Caco-2 (cell line): ENCODE measurements at regions of chr5 and their contacts with region 1.

Region 1: DNA sequence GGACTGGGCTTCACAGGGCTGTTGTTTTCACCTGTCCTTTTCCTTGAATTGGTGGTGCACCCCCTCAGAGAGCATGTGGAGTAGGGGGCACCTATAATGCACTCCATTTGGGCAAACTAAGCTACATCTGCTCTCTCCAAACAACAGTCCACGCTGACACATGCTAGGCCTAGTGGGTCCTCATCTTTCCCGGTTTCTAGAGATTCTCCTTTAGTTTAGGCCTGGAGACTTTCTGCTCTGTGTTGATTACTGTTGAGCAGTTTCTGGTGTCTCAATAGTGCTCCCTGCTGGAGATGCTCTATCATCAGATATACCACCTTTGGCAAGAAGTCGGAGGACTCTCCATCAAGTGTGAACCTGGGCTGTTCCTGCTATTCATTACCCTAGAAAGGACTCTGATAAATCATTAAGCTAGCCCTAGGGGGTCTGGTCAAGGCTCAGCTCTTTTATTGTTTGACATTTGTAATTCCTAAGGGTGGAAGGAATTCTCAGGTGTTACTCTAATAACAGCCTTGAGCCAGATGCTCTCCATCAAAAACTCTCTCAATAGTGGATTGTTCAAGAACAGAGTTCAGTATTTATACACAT is 64.0 kb upstream of the FYB1 start:
- DNase-seq: peak; percentile 77 to 79
- H3K4me3 ChIP-seq: no peak overlapping the region
- H3K4me3 Mint-ChIP-seq: no peak overlapping the region
- H3K27ac Mint-ChIP-seq: peak overlapping the region; percentile 65
- H3K4me1 ChIP-seq: peaks cover 18% of the 10 kb centered on the region
- H3K4me1 Mint-ChIP-seq: peaks cover 24% of the 10 kb centered on the region
- H3K27me3 ChIP-seq: no peaks in the 10 kb centered on the region
- H3K27me3 Mint-ChIP-seq: no peaks in the 10 kb centered on the region
- CTCF ChIP-seq: peak; percentile 70 to 73

Region 2: DNA sequence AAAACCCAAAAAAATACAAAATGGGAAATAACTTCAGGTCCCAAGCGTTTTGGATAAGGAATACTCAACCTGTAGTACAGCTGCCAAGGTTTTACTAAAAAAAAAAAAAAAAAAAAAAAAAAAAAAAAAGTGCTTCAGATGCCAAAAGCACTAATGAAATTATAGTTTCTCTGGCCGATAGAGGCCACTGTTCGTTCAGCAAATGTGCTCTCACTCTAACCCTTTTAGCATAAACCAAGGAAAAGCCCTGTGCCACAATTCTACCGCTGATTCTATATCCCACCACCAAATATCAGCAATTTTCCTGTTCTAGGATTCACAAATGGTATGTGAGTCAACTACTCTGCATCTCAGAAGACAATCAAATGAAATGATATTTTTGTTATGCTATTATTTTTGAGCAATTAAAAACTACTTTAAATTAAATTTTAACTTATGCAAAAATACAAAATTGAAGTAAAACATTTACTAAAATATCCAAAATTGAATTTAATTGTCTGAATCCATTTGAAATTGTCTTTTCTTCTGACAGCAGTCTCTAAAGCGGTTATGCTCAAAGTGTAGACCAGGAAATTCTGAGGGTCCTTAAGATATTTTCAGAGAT is 288.9 kb before region 1 on chr5:
- CTCF ChIA-PET with region 1: no interaction called
- POLR2A ChIA-PET with region 1: no interaction called
- intact Hi-C with region 1: loop called (anchors 1 kb)
- DNase-seq: peak; percentile 50
- H3K4me3 ChIP-seq: no peak overlapping the region
- H3K4me3 Mint-ChIP-seq: no peak overlapping the region
- H3K27ac Mint-ChIP-seq: no peak overlapping the region
- H3K4me1 ChIP-seq: no peaks in the 10 kb centered on the region
- H3K4me1 Mint-ChIP-seq: no peaks in the 10 kb centered on the region
- H3K27me3 ChIP-seq: no peaks in the 10 kb centered on the region
- H3K27me3 Mint-ChIP-seq: no peaks in the 10 kb centered on the region
- CTCF ChIP-seq: peak; percentile 23 to 68

Region 3: DNA sequence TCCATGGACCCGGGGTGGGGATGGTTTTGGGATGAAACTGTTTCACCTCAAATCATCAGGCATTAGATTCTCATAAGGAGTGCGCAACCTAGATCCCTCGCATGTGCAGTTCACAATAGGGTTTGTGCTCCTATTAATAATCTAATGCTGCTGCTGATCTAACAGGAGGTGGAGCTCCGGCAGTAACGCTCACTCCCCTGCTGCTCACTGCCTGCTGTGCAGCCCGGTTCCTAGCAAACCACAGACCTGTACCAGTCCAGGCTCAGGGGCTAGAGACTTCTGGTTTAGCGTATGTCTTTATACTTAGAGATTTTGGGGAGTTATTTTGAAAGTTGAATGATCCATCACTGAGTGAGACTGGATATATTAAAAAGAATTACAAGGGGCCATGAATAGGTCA is 259.3 kb before region 1 on chr5:
- CTCF ChIA-PET with region 1: no interaction called
- POLR2A ChIA-PET with region 1: no interaction called
- intact Hi-C with region 1: no loop called
- DNase-seq: no peak
- H3K4me3 ChIP-seq: no peak overlapping the region
- H3K4me3 Mint-ChIP-seq: no peak overlapping the region
- H3K27ac Mint-ChIP-seq: no peak overlapping the region
- H3K4me1 ChIP-seq: no peaks in the 10 kb centered on the region
- H3K4me1 Mint-ChIP-seq: no peaks in the 10 kb centered on the region
- H3K27me3 ChIP-seq: no peaks in the 10 kb centered on the region
- H3K27me3 Mint-ChIP-seq: no peaks in the 10 kb centered on the region
- CTCF ChIP-seq: no peak

Region 4: GRCh38 chr5:39074016-39074886 is 209.1 kb before region 1 on chr5 and contains the start of gene RICTOR:
- CTCF ChIA-PET with region 1: no interaction called
- POLR2A ChIA-PET with region 1: no interaction called
- intact Hi-C with region 1: loop called (anchors 5 kb)
- DNase-seq: peak; percentile 89 to 92
- H3K4me3 ChIP-seq: peak within 1 kb of the TSS; percentile 83
- H3K4me3 Mint-ChIP-seq: peak within 1 kb of the TSS; percentile 95
- H3K27ac Mint-ChIP-seq: peak within 1 kb of the TSS; percentile 94
- H3K4me1 ChIP-seq: peaks cover 6% of the 10 kb centered on the region; the same call in 1 of the 2 replicates
- H3K4me1 Mint-ChIP-seq: no peaks in the 10 kb centered on the region
- H3K27me3 ChIP-seq: no peaks in the 10 kb centered on the region
- H3K27me3 Mint-ChIP-seq: no peaks in the 10 kb centered on the region
- CTCF ChIP-seq: no peak
- total RNA-seq, gene RICTOR: 25.2 and 25.7 TPM in 2 replicates

Region 5: DNA sequence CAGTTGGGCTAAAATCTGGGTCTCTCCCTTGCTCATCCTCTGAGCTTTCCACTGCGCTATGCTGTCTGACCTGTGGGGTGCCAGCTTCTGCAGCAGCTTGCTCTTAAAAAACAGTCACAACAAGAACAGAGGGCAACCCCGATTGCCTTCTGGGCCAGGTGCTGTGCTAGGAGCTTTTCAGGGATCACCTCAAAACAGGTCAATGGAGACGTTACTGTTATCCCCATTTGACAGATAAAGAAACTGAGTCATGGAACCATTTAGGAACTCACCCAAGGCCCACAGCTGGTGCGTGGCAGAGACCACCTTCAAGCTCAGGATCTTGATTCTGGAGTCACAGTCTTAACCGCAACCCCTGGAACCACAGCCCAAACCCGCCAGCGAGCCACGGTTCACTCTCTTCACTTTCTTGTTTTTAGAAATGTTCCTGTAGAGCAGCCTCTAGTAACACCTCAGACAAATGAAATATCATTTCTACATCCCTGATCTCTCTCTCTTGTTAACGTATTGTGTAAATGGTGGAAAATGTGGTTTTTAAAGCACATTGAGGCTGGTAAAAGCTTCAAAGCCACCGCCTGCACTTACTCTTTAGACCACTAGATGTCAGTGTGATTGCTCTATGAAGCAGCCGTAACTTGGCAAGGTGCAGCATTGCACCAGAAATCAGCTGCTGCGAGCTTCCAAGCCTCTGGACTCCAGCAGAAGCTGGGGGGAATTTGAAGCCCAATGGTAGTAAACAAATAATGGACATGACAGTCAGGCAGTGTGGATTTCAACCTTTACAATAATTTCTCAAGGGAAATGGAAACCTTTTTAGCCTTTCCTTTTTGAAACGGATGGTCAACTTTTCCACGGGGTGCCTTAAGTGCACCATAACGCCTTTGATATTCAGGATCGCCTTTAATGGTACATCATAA is 65.7 kb before region 1 on chr5:
- CTCF ChIA-PET with region 1: interaction called, 51 read pairs
- POLR2A ChIA-PET with region 1: interaction called, 4 read pairs
- intact Hi-C with region 1: loop called (anchors 1 kb)
- DNase-seq: peak; percentile 74 to 77
- H3K4me3 ChIP-seq: no peak overlapping the region
- H3K4me3 Mint-ChIP-seq: no peak overlapping the region
- H3K27ac Mint-ChIP-seq: peak overlapping the region; percentile 2
- H3K4me1 ChIP-seq: peaks cover 24% of the 10 kb centered on the region
- H3K4me1 Mint-ChIP-seq: peaks cover 13% of the 10 kb centered on the region
- H3K27me3 ChIP-seq: no peaks in the 10 kb centered on the region
- H3K27me3 Mint-ChIP-seq: no peaks in the 10 kb centered on the region
- CTCF ChIP-seq: peak; percentile 92 to 94

Region 6: DNA sequence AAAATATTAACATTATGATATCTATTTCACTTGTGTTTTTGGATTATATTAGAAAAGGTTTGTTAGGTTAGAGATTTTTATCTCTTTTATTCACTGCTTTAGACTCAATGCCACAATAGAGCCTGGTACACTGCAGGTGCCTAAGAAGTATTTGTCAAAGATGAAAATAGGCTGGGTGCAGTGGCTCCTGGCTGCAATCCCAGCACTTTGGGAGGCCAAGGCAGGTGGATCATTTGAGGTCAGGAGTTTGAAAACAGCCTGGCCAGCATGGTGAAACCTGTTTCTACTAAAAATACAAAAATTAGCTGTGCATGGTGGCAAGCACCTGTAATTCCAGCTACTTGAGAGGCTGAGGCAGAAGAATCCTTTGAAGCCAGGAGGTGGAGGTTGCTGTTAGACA is 16.6 kb after region 1 on chr5:
- CTCF ChIA-PET with region 1: no interaction called
- POLR2A ChIA-PET with region 1: no interaction called
- intact Hi-C with region 1: no loop called
- DNase-seq: no peak
- H3K4me3 ChIP-seq: no peak overlapping the region
- H3K4me3 Mint-ChIP-seq: no peak overlapping the region
- H3K27ac Mint-ChIP-seq: no peak overlapping the region
- H3K4me1 ChIP-seq: no peaks in the 10 kb centered on the region
- H3K4me1 Mint-ChIP-seq: no peaks in the 10 kb centered on the region
- H3K27me3 ChIP-seq: no peaks in the 10 kb centered on the region
- H3K27me3 Mint-ChIP-seq: no peaks in the 10 kb centered on the region
- CTCF ChIP-seq: no peak

Region 7: DNA sequence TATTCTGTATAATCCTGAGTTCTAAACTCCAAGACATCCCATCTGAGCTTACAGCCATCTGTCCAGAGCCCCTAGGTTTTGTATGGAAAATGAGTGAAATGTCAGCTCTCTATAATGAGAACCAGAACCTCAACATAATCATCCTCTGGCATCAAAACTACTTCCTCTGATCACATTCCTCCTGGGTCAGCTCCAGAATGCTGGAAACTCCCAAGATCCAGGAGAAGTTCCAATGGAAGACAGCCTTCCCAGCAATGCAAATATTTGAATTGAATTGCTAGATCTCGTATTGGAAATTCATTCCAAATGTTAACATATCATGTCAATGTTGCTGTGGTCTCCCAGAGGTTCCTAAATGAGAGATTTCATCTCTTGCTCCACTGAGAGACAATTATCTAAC is 57.2 kb after region 1 on chr5:
- CTCF ChIA-PET with region 1: no interaction called
- POLR2A ChIA-PET with region 1: no interaction called
- intact Hi-C with region 1: no loop called
- DNase-seq: no peak
- H3K4me3 ChIP-seq: no peak overlapping the region
- H3K4me3 Mint-ChIP-seq: no peak overlapping the region
- H3K27ac Mint-ChIP-seq: no peak overlapping the region
- H3K4me1 ChIP-seq: peaks cover 5% of the 10 kb centered on the region; the same call in 1 of the 2 replicates
- H3K4me1 Mint-ChIP-seq: peaks cover 14% of the 10 kb centered on the region
- H3K27me3 ChIP-seq: no peaks in the 10 kb centered on the region
- H3K27me3 Mint-ChIP-seq: no peaks in the 10 kb centered on the region
- CTCF ChIP-seq: no peak

Region 8: GRCh38 chr5:39570403-39571027 is 287.2 kb after region 1 on chr5:
- CTCF ChIA-PET with region 1: no interaction called
- POLR2A ChIA-PET with region 1: no interaction called
- intact Hi-C with region 1: loop called (anchors 5 kb)
- DNase-seq: peak in 1 of 2 experiments; percentile 34
- H3K4me3 ChIP-seq: no peak overlapping the region
- H3K4me3 Mint-ChIP-seq: no peak overlapping the region
- H3K27ac Mint-ChIP-seq: no peak overlapping the region
- H3K4me1 ChIP-seq: peaks cover 11% of the 10 kb centered on the region; the same call in 1 of the 2 replicates
- H3K4me1 Mint-ChIP-seq: no peaks in the 10 kb centered on the region
- H3K27me3 ChIP-seq: no peaks in the 10 kb centered on the region
- H3K27me3 Mint-ChIP-seq: no peaks in the 10 kb centered on the region
- CTCF ChIP-seq: peak; percentile 69 to 70